CD8-positive, alpha-beta memory T cell (primary cell): ENCODE measurements at regions of chr10 and their contacts with region 1.

Region 1: GRCh38 chr10:6348096-6348874 is 145.6 kb downstream of the PFKFB3 start:
- DNase-seq: peak; percentile 62 to 94 (median 88)
- H3K4me3 ChIP-seq: no peak overlapping the region
- H3K4me3 Mint-ChIP-seq: peak overlapping the region; percentile 63 to 80 (median 75)
- H3K27ac ChIP-seq: peak overlapping the region; percentile 49
- H3K27ac Mint-ChIP-seq: peak overlapping the region; percentile 86 to 98 (median 94)
- H3K4me1 ChIP-seq: peaks cover 36% of the 10 kb centered on the region
- H3K4me1 Mint-ChIP-seq: peaks cover 44 to 48% (median 46%) of the 10 kb centered on the region in 3 donors
- H3K27me3 ChIP-seq: no peaks in the 10 kb centered on the region
- H3K27me3 Mint-ChIP-seq: no peaks in the 10 kb centered on the region

Region 2: GRCh38 chr10:6068422-6068821 is 279.9 kb before region 1 on chr10:
- CTCF ChIA-PET with region 1: no interaction called
- POLR2A ChIA-PET with region 1: no interaction called
- DNase-seq: peak in 2 of 5 donors; percentile 22 to 68
- H3K4me3 ChIP-seq: peak overlapping the region; percentile 33
- H3K4me3 Mint-ChIP-seq: peak overlapping the region in 3 of 7 donors; percentile 15 to 39 (median 24)
- H3K27ac ChIP-seq: no peak overlapping the region
- H3K27ac Mint-ChIP-seq: no peak overlapping the region
- H3K4me1 ChIP-seq: peaks cover 72% of the 10 kb centered on the region
- H3K4me1 Mint-ChIP-seq: peaks cover 40 to 78% (median 66%) of the 10 kb centered on the region in 3 donors
- H3K27me3 ChIP-seq: no peaks in the 10 kb centered on the region
- H3K27me3 Mint-ChIP-seq: peaks cover under 1 to 8% of the 10 kb centered on the region in 2 donors

Region 3: GRCh38 chr10:6382081-6382480 is 33.8 kb after region 1 on chr10:
- CTCF ChIA-PET with region 1: interaction called, 3 read pairs
- POLR2A ChIA-PET with region 1: interaction called, 12 read pairs
- DNase-seq: peak in 2 of 5 donors; percentile 10 to 57
- H3K4me3 ChIP-seq: no peak overlapping the region
- H3K4me3 Mint-ChIP-seq: peak overlapping the region in 4 of 7 donors; percentile 34 to 79 (median 47)
- H3K27ac ChIP-seq: no peak overlapping the region
- H3K27ac Mint-ChIP-seq: peak overlapping the region in 4 of 8 donors; percentile 2 to 81 (median 58)
- H3K4me1 ChIP-seq: peaks cover 13% of the 10 kb centered on the region
- H3K4me1 Mint-ChIP-seq: peaks cover 10 to 16% (median 10%) of the 10 kb centered on the region in 3 donors
- H3K27me3 ChIP-seq: no peaks in the 10 kb centered on the region
- H3K27me3 Mint-ChIP-seq: peaks cover 0 to 4% of the 10 kb centered on the region in 2 donors

Region 4: GRCh38 chr10:6445501-6446316 is 97.4 kb after region 1 on chr10:
- CTCF ChIA-PET with region 1: no interaction called
- POLR2A ChIA-PET with region 1: no interaction called
- DNase-seq: peak; percentile 25 to 71 (median 45)
- H3K4me3 ChIP-seq: no peak overlapping the region
- H3K4me3 Mint-ChIP-seq: peak overlapping the region in 2 of 7 donors; percentile 13 to 82
- H3K27ac ChIP-seq: no peak overlapping the region
- H3K27ac Mint-ChIP-seq: peak overlapping the region; percentile 1 to 95 (median 48)
- H3K4me1 ChIP-seq: peaks cover 6% of the 10 kb centered on the region
- H3K4me1 Mint-ChIP-seq: peaks cover 16 to 43% (median 23%) of the 10 kb centered on the region in 3 donors
- H3K27me3 ChIP-seq: no peaks in the 10 kb centered on the region
- H3K27me3 Mint-ChIP-seq: no peaks in the 10 kb centered on the region